Left cardiac atrium (tissue), 4 donors: ENCODE measurements at regions of chr4 and their contacts with region 1.

Region 1: GRCh38 chr4:1346781-1347409 is at the start of gene UVSSA:
- DNase-seq: peak; percentile 100
- ATAC-seq: peak; percentile 94 to 96
- total RNA-seq, gene UVSSA: 7.9 to 8.4 TPM

Region 2: DNA sequence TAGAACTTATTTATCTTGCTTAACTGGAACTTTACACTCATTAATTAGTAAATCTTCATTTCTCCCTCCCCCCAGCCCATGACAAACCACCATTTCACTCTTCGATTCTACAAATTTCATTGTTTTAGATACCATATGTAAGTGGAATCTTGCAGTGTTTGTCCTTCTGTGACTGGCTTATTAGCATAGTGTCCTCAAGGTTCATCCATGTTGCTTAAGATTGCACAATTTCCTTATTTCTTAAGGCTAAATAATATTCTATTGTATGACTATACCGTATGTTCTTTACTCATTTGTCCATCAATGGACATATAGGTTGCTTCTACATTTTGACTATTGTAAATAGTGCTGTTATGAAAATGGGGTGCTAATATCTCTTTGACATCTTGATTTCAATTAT is 209.0 kb before region 1 on chr4:
- intact Hi-C with region 1: loop called (anchors 1 to 5 kb)
- DNase-seq: no peak
- ATAC-seq: no peak

Region 3: DNA sequence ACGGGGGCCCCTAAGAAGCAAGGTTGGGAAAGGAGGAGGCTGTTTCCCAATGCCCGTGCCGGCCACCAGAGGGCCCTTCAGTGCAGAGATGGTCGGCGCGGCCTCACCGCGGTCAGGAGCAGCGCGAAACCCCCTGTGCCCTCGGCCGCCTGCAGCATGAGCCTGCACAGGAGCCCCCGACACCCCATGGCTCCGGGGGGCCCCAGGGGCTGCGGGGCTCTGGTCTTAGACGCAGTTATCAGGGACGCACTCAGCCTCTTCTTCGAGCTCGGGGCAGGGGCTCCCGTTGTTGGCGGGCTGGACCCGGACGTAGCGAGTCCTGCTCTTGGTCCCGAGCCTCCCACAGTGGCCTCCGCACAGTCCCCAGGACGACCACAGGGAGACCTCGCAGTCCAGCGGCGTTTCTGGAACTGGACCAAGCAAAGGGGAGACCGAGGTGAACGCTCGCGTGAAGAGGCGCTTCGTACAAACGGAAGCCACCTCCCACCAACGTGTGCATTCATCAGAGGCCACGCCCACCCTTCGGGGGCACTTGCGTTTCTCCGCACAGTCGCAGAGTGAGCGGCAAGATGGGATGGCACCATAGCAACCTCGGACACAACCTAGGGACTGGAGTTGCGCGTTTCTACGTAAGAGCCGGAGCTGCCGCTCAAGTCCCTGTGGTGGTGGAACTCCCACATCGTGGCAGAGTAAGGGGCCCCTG is 179.5 kb before region 1 on chr4:
- intact Hi-C with region 1: loop called in 1 of 2 experiments (anchors 10 kb)
- DNase-seq: peak; percentile 85
- ATAC-seq: peak; percentile 84

Region 4: DNA sequence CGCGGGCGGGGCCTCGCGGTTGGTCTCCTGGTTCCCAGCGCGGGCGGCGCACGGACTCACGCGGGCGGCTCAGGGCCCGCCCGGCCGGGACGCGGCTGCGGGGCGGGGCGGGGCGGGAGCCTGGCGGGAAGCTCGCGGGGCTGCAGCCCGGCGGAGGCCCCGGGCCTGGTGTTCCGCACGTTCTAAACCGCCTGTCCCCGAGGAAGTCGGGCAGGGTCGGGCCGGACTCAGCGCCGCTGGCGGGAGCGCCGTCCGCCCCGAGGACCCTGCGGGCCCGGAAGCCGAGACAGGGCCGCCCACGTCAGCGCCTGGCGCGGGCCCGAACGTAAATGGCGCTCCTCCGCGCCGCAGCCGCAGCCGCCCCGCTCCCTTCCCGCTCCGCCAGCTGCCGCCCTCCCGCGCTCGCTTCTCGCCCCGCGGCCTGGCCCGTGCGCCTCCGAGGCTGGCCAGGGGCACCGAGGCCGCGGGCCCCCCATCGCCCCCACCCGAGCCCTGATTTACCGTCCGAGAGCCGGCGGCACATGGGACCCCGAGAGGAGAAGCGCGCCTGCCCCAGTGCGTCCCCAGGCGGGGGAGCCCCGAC is 97.7 kb before region 1 on chr4:
- intact Hi-C with region 1: loop called (anchors 1 to 5 kb)
- DNase-seq: peak; percentile 91
- ATAC-seq: peak; percentile 56 to 75

Region 5: DNA sequence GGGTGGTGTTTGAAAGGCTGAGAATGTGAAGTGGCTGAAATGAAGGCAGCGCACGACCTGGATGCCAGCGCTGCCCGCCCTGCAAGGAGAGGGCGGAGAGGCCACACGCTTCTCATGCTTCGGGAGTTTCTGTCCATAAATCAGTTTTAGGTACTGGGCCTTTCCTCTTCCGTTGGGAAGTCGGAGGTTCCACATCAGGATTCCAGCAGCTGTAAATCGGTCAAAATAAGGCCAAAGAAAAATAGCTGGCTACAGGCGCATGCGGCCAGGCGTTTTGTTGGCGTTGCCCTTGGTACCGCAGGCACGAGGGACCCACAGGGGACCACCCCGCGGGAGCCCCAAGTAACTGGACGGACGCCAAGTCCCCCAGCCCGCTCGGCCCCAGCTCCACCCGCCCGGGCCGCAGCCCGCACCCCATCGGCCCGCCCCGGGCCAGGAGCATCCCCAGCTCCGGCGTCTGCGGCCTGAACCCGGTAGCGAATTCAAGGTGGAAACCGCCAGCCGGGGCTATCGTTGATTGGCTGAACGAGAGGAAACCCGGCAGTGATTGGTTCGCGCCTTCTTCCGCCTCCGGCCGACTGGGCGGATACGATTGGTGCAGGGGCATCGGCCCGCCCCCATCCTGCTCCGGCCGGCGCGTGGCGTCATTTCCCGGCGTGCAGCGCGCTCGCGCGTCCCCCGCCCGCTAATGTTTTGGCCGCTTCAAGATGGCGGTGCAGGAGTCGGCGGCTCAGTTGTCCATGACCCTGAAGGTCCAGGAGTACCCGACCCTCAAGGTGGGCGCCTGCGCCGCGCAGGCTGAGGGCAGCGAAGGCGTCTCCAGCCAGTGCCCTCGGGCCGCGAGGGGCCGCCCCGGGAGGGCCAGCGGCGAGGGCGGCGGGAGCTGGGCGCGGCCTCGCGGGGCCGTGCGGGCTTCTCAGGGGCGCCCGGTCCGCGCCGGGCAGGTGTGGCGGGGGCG is 57.4 kb before region 1 on chr4 and contains the start of gene MAEA:
- intact Hi-C with region 1: loop called in 1 of 2 experiments (anchors 10 kb)
- DNase-seq: peak; percentile 98
- ATAC-seq: peak; percentile 98 to 99
- total RNA-seq, gene MAEA: 41.9 to 59.3 TPM

Region 6: DNA sequence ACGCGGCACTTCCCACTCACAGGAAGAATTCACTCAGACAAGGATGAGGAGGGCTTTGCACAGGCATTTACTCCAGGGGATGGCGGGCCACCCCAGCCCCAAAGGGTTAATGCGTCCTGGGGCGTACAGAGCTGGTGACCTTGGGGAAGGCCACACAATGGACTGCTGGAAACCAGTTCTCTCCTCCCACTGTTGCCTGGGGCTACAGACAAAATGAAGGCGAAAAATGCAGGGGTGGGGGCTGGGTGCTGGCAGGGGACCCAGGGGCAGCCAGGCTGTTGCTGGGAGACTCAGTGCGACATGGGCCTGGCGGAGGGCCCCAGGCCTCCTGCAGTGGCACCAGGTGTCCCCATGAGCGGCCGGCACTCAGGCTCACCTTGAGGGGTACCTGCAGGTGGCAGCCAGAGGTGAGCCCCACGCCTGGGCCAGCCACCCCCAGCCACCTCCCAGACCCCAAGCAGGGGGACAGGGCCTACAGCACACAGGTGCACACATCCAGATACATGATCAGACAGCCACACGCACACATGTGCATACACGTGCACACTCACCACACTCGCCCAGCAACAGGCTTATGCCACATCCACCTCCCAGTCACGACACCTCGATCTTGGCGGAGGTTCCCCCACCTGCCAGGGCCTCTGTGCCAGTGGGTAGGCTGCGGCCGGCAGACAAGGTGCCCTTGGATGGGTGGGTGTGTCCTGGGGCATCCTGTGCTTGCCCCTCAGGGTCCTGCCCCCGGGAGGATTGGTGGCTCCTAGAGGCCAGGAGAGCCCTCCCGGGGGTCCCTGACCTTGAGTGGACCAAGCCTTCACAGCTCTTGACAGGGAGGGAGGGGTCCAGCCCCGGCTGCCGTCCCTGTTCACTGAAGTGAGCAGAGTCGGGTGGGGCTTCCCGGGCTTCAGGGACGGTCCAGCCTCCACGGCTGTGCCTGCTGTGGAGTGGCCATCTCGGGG is 725.3 kb after region 1 on chr4:
- intact Hi-C with region 1: no loop called
- DNase-seq: no peak
- ATAC-seq: no peak